Activated CD4-positive, alpha-beta memory T cell treated with anti-CD3 and anti-CD28 coated beads, Interleukin-2, amount 10 ng/mL, durations not matched to agents 7 days and 5 days (primary cell): ENCODE measurements at regions of chr14 and their contacts with region 1.

Region 1: DNA sequence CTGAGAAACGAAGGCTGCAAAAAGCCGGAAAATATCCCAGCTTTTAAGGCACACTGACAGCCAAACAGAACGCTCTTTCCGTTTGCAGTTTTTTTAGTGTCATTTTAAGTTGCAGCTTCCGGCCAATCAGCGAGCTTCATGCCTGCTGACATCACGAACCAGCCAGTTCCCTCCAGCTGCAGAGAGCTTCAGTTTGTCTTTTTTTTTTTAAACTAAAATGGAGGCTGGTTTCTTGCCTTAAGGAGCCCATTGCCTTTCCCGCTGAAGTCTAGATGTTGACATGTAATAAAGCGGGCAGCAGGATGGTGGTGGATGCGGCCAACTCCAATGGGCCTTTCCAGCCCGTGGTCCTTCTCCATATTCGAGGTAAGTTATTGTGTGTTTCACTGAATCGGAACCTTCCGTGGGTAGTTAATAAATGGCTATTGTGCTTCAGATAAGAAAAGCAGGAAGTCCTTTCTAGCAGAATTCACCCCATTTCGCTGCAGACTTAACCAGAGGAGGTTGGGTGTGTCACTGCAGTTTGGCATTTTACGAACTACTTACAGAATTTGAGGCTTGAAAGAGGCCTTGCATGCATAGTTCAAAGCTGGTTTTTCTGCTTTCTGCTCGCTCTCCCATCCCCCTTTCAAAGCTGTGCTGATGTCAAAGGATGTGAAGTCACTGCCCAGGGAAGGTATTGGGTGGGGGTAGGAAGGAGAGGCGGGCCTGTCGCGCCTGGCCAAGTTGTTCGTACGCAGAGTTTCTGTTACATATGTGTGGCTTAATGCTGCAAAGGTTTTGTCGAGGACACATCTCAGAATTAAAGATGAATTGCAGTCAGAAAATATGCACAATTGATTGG is 48.4 kb downstream of the PPP2R5C start:
- DNase-seq: peak; percentile 90
- H3K4me3 Mint-ChIP-seq: peak overlapping the region; percentile 83
- H3K27ac Mint-ChIP-seq: peak overlapping the region; percentile 96
- H3K4me1 Mint-ChIP-seq: peaks cover 48% of the 10 kb centered on the region
- H3K27me3 Mint-ChIP-seq: no peaks in the 10 kb centered on the region

Region 2: GRCh38 chr14:101721951-101722661 is 87.8 kb before region 1 on chr14:
- CTCF ChIA-PET with region 1: interaction called, 3 read pairs
- POLR2A ChIA-PET with region 1: interaction called, 29 read pairs
- DNase-seq: peak; percentile 89
- H3K4me3 Mint-ChIP-seq: peak overlapping the region; percentile 74
- H3K27ac Mint-ChIP-seq: peak overlapping the region; percentile 100
- H3K4me1 Mint-ChIP-seq: peaks cover 44% of the 10 kb centered on the region
- H3K27me3 Mint-ChIP-seq: no peaks in the 10 kb centered on the region

Region 3: DNA sequence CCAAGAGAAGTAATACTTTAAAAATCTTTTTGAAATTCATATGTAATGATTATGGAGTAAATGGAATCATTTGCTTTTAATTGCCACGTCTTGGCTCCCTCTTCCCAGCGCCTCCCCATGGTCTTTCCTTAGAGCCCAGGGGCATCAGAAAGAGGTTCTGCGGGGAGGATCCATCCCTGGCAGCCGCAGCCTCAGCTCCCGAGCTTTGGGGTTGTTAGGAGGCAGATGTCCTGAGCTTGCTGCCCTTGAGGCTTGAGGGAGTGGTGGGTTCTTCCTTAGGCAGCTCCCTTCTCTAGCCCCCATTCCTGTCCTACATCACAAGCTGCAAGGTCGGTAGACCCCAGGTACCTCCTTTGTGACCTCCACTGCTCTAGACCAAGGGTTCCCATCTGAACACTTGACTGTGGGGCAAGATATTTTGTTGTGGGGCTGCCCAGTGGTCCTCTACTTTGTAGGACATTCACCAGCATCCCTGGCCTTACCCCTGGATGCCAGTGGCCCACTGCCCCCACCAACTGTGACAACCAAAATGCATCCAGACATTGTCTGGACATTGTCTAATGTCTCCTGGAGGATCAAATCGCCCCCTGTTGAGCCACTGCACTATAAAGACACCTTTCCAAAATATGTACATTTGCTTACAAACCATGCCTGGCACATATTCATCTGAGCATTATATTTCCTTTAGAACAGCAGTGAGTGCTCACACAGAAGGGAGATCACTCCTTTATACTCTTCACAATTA is 42.1 kb before region 1 on chr14:
- CTCF ChIA-PET with region 1: interaction called, 18 read pairs
- POLR2A ChIA-PET with region 1: interaction called, 39 read pairs
- DNase-seq: no peak
- H3K4me3 Mint-ChIP-seq: no peak overlapping the region
- H3K27ac Mint-ChIP-seq: no peak overlapping the region
- H3K4me1 Mint-ChIP-seq: peaks cover 22% of the 10 kb centered on the region
- H3K27me3 Mint-ChIP-seq: no peaks in the 10 kb centered on the region

Region 4: DNA sequence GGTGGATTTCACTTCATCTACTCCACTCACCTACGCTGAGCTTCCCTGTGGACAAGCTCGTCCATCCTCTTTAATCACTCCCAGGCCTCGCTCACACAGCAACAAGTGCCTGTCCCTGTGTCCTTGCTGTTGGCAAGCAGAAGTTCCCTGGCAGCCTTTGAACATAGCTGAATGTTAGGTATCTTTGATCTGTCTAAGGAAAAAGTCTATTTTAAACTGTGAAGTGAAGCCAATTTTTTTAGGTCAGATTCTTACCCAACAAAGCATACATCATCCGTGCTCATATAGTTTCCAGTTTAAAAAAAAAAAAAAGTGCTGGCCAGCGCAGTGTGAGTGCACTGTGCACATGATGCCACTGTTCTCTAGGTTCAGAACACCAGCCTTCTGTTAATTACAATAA is 12.0 kb before region 1 on chr14:
- CTCF ChIA-PET with region 1: interaction called, 4 read pairs
- POLR2A ChIA-PET with region 1: interaction called, 85 read pairs
- DNase-seq: no peak
- H3K4me3 Mint-ChIP-seq: no peak overlapping the region
- H3K27ac Mint-ChIP-seq: no peak overlapping the region
- H3K4me1 Mint-ChIP-seq: peaks cover 5% of the 10 kb centered on the region
- H3K27me3 Mint-ChIP-seq: no peaks in the 10 kb centered on the region

Region 5: DNA sequence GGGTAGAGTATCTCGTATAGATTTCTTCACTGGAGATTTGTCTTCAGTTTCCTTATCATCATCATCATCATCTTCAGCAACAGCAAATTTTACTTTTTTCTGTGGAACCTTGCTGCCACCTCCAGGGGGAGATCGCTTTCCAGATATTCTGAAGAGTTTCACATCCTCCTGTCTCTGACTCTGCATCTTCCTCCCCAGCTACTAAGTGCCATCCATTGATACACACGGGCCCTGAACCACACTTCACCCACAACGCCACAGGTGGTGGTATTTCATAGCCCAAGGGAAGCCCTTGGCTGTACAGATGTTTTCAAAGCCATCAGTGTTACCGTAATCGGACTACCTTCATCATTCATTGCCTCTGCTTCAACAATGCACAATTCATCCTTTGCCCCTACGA is 33.8 kb after region 1 on chr14:
- CTCF ChIA-PET with region 1: interaction called, 3 read pairs
- POLR2A ChIA-PET with region 1: interaction called, 55 read pairs
- DNase-seq: peak; percentile 70
- H3K4me3 Mint-ChIP-seq: no peak overlapping the region
- H3K27ac Mint-ChIP-seq: peak overlapping the region; percentile 37
- H3K4me1 Mint-ChIP-seq: peaks cover 88% of the 10 kb centered on the region
- H3K27me3 Mint-ChIP-seq: no peaks in the 10 kb centered on the region